Activated CD4-positive, alpha-beta T cell treated with anti-CD3 and anti-CD28 coated beads, Interleukin-2, amount 10 ng/mL, durations not matched to agents 24 days and 14 days (primary cell): ENCODE measurements at regions of chr2 and their contacts with region 1.

Region 1: DNA sequence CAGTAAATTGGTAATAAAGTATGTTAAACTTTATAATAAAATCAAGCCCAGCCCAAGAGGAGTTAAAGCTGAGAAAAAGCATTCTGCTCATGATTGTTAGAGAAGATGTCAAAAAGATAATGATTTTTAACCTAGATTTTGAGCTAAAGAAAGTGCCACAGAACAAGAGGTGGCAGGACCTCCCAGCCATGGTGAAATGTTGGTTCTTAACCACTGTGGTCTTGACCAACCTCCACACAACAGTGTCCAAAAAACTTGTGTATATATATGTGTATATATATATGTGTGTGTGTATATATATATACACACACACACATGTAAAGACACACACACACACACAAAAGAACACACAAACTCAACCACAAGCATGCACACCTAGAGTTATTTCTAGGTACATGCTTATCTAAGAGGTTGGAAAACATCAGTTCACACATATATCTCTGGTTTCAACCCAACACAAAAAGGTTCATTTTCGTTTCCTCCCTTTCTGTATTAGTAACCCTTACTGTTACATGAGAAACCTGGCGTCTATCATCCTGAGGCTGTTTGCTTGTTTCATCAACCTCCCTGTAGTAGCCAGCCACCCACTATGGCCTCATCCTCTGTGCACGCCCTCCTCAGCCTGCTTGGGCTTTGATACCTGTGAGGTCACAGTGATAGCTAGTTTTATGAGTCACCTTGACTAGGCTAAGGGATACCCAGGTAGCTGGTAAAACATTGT is 631.8 kb upstream of the ID2 start:
- DNase-seq: peak; percentile 81
- H3K4me3 Mint-ChIP-seq: peak overlapping the region; percentile 7
- H3K27ac Mint-ChIP-seq: peak overlapping the region; percentile 84
- H3K4me1 Mint-ChIP-seq: peaks cover 23% of the 10 kb centered on the region
- H3K27me3 Mint-ChIP-seq: no peaks in the 10 kb centered on the region

Region 2: DNA sequence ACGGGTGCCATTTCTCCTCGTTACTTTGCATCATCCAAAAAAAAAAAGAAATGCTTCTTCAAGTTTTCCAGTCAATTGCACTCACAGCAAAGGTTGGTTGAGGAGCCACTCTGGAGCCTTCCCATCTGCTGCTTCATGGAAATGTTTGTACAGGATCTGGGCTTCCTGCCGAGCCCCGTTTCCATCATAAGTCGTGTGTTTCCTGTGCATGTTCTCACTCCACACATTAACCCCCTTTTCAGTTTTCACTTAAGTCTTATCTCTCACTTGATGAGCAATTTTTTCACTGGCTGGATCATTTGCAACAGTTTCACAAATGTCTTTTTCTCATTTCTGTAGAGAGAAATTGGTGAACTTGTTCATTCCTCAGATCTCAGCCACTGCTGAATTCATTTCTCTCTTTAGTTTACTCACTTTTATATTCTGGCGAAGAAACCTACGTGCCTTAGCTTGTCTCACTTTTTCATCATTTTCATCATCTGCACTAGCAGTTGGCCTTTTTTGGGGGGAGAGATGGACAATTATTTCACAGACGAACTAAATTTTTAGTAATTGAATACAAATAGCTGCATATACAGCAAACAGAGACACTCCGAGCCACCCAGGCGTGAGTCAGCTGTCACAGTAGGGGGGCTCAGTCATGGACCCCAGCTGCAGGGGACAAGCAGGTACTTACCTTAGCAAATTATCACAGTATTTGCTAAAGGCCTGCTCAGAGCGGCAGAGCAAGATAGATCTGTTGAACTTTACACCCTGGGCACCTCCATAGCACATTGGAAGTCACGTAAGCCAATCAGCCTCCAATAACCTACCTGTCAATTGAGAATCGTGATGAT is 119.0 kb before region 1 on chr2:
- intact Hi-C with region 1: loop called (anchors 1 kb)
- DNase-seq: peak; percentile 54
- H3K4me3 Mint-ChIP-seq: peak overlapping the region; percentile 1
- H3K27ac Mint-ChIP-seq: peak overlapping the region; percentile 76
- H3K4me1 Mint-ChIP-seq: peaks cover 10% of the 10 kb centered on the region
- H3K27me3 Mint-ChIP-seq: no peaks in the 10 kb centered on the region

Region 3: GRCh38 chr2:7943446-7943845 is 106.6 kb before region 1 on chr2:
- intact Hi-C with region 1: no loop called
- DNase-seq: no peak
- H3K4me3 Mint-ChIP-seq: no peak overlapping the region
- H3K27ac Mint-ChIP-seq: no peak overlapping the region
- H3K4me1 Mint-ChIP-seq: peaks cover 11% of the 10 kb centered on the region
- H3K27me3 Mint-ChIP-seq: peaks cover 1% of the 10 kb centered on the region

Region 4: DNA sequence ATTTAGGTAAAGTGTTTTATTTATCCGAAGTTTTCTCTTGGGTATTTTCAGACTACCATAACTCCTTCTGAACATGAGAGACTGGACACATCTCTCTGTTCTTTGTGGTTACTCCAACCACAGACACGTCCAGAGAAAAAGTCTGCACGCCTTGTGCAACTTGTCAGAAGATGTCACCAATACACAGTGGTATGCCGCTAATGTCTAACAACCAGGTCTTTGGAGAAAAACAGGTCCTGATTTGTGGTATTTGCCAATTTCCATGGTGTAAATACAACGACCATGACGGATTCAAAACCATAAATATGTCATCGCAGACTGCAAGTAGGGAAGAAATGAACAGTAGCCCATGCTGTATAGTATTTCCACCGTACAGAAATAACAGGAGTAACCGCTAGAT is 11.2 kb after region 1 on chr2:
- intact Hi-C with region 1: no loop called
- DNase-seq: no peak
- H3K4me3 Mint-ChIP-seq: no peak overlapping the region
- H3K27ac Mint-ChIP-seq: no peak overlapping the region
- H3K4me1 Mint-ChIP-seq: peaks cover 16% of the 10 kb centered on the region
- H3K27me3 Mint-ChIP-seq: no peaks in the 10 kb centered on the region

Region 5: DNA sequence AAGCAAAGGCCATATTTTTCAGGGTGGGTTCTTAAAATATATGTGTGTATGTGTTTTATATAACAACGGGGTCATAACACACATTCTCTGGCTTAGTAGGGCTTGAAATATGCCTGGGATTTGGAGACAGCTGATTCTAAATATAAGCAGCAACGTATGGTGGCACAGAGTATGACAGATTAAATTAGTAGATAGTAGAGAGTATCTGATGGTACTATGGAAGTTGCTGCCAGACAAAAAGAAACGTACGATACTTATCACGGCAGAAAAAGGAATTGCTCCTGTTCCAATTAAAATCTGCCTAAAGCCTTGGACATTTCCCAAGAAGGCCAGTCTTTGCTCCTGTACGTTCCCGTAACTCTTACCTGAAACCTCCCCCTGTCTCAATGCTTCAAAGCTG is 23.9 kb after region 1 on chr2:
- intact Hi-C with region 1: no loop called
- DNase-seq: no peak
- H3K4me3 Mint-ChIP-seq: no peak overlapping the region
- H3K27ac Mint-ChIP-seq: no peak overlapping the region
- H3K4me1 Mint-ChIP-seq: peaks cover 21% of the 10 kb centered on the region
- H3K27me3 Mint-ChIP-seq: no peaks in the 10 kb centered on the region

Region 6: GRCh38 chr2:8090748-8091700 is 41.0 kb after region 1 on chr2:
- intact Hi-C with region 1: loop called (anchors 5 kb)
- DNase-seq: peak; percentile 73
- H3K4me3 Mint-ChIP-seq: no peak overlapping the region
- H3K27ac Mint-ChIP-seq: peak overlapping the region; percentile 30
- H3K4me1 Mint-ChIP-seq: no peaks in the 10 kb centered on the region
- H3K27me3 Mint-ChIP-seq: no peaks in the 10 kb centered on the region